Activated CD4-positive, alpha-beta memory T cell treated with anti-CD3 and anti-CD28 coated beads, Interleukin-2, amount 10 ng/mL, durations not matched to agents 7 days and 5 days (primary cell): ENCODE measurements at regions of chr1 and their contacts with region 1.

Region 1: DNA sequence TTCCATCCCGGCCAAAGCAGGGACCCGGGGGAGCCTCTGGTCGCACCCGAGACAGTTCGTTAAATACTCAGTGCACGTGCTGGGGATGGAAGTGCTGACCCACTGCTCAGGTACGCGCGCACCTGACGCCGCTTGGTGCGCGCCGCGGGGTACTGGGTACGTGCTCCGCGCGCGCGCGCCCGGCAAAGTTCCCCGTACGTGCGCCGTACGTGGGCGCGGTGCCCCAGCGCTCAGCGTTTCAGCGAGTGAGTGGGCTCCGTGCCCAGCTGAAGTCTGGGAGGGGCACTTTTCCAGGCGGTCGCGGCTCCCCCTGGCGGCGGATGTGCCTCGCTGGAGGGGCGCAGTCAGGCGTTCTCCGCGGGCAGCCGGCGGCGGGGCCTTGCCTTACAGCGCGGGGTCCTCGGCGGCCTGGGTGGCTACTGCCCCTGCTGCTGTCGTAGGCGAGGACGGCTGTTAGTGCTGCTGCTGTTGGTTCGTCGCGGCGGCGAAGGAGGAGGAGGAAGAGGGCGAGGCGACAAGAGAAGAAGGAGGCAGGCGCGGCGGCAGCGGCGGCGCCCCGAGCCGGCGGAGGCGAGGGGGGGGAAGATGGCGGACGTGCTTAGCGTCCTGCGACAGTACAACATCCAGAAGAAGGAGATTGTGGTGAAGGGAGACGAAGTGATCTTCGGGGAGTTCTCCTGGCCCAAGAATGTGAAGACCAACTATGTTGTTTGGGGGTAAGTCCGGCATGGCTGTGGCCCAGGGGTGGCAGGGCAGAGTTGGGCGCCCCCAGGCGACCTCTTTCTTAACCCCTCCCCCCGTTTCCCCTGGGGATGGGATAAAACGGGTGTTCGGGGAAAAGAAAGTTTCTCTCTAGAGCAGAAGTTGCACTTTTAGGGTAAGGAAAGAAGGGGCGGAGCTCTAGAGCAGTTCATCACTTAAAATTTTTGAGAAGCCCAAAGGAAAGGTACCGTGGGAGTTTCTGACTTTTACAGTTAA is at the start of gene CDC73:
- DNase-seq: peak; percentile 98
- H3K4me3 Mint-ChIP-seq: peak within 1 kb of the TSS; percentile 88
- H3K27ac Mint-ChIP-seq: peak within 1 kb of the TSS; percentile 90
- H3K4me1 Mint-ChIP-seq: peaks cover 59% of the 10 kb centered on the region
- H3K27me3 Mint-ChIP-seq: peaks cover 2% of the 10 kb centered on the region
- total RNA-seq, gene CDC73: 62.0 to 64.9 TPM

Region 2: DNA sequence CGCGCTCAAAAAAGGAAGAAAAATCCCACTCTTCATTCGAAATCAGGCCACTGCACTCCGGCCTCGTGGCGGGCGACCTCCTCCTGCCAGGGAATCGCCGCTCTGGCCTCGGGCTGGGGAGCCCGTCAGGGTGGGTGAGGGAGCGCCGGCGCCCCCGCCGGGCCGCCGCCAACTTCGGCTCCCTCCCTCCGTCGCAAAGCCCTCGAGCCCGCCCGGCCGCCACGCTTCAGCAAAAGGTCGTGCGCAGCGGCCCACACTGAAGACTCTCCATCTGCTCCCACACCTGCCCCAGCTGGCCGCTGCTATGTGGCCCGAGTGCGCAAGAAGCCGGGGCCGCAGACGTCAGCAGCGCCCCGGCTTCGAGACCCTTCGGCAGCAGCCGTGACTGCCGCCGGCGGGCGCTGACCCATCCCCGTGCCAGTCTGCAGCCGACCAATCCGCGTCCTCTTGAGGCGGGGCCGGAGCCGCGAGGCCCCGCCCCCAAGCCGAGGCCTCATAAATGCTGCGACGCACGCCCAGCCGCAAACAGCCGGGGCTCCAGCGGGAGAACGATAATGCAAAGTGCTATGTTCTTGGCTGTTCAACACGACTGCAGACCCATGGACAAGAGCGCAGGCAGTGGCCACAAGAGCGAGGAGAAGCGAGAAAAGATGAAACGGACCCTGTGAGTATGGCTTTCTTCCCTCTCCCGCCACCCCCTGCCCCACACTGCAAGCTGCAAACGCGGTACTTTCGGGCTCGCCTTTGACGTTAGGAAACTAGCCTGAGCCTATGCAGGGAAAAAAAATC is 313.2 kb before region 1 on chr1 and contains the start of gene RGS2:
- CTCF ChIA-PET with region 1: interaction called, 12 read pairs
- POLR2A ChIA-PET with region 1: interaction called, 18 read pairs
- DNase-seq: peak; percentile 89
- H3K4me3 Mint-ChIP-seq: peak within 1 kb of the TSS; percentile 98
- H3K27ac Mint-ChIP-seq: peak within 1 kb of the TSS; percentile 83
- H3K4me1 Mint-ChIP-seq: peaks cover 39% of the 10 kb centered on the region
- H3K27me3 Mint-ChIP-seq: peaks cover 7% of the 10 kb centered on the region
- total RNA-seq, gene RGS2: 8.0 to 8.2 TPM

Region 3: GRCh38 chr1:192866241-192866868 is 255.6 kb before region 1 on chr1:
- CTCF ChIA-PET with region 1: no interaction called
- POLR2A ChIA-PET with region 1: no interaction called
- DNase-seq: no peak
- H3K4me3 Mint-ChIP-seq: no peak overlapping the region
- H3K27ac Mint-ChIP-seq: no peak overlapping the region
- H3K4me1 Mint-ChIP-seq: no peaks in the 10 kb centered on the region
- H3K27me3 Mint-ChIP-seq: no peaks in the 10 kb centered on the region

Region 4: GRCh38 chr1:193031438-193031837 is 90.5 kb before region 1 on chr1:
- CTCF ChIA-PET with region 1: no interaction called
- POLR2A ChIA-PET with region 1: no interaction called
- DNase-seq: no peak
- H3K4me3 Mint-ChIP-seq: no peak overlapping the region
- H3K27ac Mint-ChIP-seq: no peak overlapping the region
- H3K4me1 Mint-ChIP-seq: peaks cover 3% of the 10 kb centered on the region
- H3K27me3 Mint-ChIP-seq: no peaks in the 10 kb centered on the region

Region 5: GRCh38 chr1:193069748-193070385 is 52.0 kb before region 1 on chr1:
- CTCF ChIA-PET with region 1: interaction called, 12 read pairs
- POLR2A ChIA-PET with region 1: interaction called, 3 read pairs
- DNase-seq: no peak
- H3K4me3 Mint-ChIP-seq: no peak overlapping the region
- H3K27ac Mint-ChIP-seq: peak overlapping the region; percentile 44
- H3K4me1 Mint-ChIP-seq: peaks cover 40% of the 10 kb centered on the region
- H3K27me3 Mint-ChIP-seq: no peaks in the 10 kb centered on the region

Region 6: GRCh38 chr1:193104906-193105820 is 16.7 kb before region 1 on chr1 and contains the start of gene GLRX2:
- CTCF ChIA-PET with region 1: interaction called, 12 read pairs
- POLR2A ChIA-PET with region 1: interaction called, 43 read pairs
- DNase-seq: peak; percentile 62
- H3K4me3 Mint-ChIP-seq: peak within 1 kb of the TSS; percentile 92
- H3K27ac Mint-ChIP-seq: peak within 1 kb of the TSS; percentile 68
- H3K4me1 Mint-ChIP-seq: peaks cover 20% of the 10 kb centered on the region
- H3K27me3 Mint-ChIP-seq: no peaks in the 10 kb centered on the region
- total RNA-seq, gene GLRX2: 16.1 to 18.0 TPM